Activated CD4-positive, alpha-beta T cell treated with anti-CD3 and anti-CD28 coated beads for 36 hours (primary cell): ENCODE measurements at regions of chr6 and their contacts with region 1.

Region 1: DNA sequence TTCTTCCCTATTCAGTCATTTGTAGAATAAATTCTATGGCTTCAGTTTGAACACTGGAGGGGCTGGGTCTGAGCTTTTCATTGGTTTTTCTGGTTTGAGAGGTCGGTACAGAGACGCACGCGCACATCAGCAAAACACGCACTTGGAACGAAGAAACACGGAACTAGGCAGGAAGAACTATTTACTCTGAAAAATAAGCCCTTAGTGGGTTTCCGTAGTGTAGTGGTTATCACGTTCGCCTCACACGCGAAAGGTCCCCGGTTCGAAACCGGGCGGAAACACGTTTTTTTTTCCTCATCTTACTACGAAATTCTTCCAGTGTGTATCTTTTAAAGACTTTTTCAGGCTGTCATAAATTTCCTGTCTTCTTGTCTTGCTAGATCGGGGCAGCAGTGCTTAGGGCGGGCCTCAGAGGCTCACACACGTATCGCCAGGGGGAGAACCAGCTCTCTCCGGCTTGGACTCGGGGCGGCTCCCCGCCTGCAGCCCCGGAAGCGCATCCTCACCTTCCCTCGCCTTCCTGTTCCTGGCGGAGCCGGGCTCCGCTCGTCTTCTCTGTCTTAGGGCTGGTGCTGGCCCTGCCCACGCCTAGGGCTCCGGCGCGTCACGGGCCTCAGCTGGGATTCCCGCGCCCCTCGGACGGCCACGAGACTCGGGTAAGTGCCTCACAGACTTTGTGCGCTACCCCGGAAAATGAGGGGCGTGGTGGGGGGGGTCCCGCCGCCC is at the start of gene HMGN4:
- DNase-seq: peak; percentile 89
- ATAC-seq: peak; percentile 63
- H3K4me3 Mint-ChIP-seq: peak within 1 kb of the TSS; percentile 89
- H3K27ac Mint-ChIP-seq: peak within 1 kb of the TSS; percentile 99
- H3K4me1 Mint-ChIP-seq: peaks cover 57% of the 10 kb centered on the region
- H3K27me3 Mint-ChIP-seq: no peaks in the 10 kb centered on the region
- total RNA-seq, gene HMGN4: 63.6 to 86.4 TPM

Region 2: GRCh38 chr6:26175428-26176181 is 362.4 kb before region 1 on chr6:
- CTCF ChIA-PET with region 1: no interaction called
- POLR2A ChIA-PET with region 1: no interaction called
- intact Hi-C with region 1: loop called in 1 of 2 experiments (anchors 10 kb)
- DNase-seq: peak; percentile 69
- ATAC-seq: peak; percentile 14
- H3K4me3 Mint-ChIP-seq: peak overlapping the region; percentile 30
- H3K27ac Mint-ChIP-seq: peak overlapping the region; percentile 80
- H3K4me1 Mint-ChIP-seq: peaks cover 33% of the 10 kb centered on the region
- H3K27me3 Mint-ChIP-seq: no peaks in the 10 kb centered on the region

Region 3: GRCh38 chr6:26329763-26330511 is 208.1 kb before region 1 on chr6:
- CTCF ChIA-PET with region 1: interaction called, 6 read pairs
- POLR2A ChIA-PET with region 1: interaction called, 4 read pairs
- intact Hi-C with region 1: loop called (anchors 1 to 5 kb)
- DNase-seq: peak; percentile 80
- ATAC-seq: peak; percentile 37
- H3K4me3 Mint-ChIP-seq: peak overlapping the region; percentile 88
- H3K27ac Mint-ChIP-seq: peak overlapping the region; percentile 70
- H3K4me1 Mint-ChIP-seq: peaks cover 38% of the 10 kb centered on the region
- H3K27me3 Mint-ChIP-seq: peaks cover 10% of the 10 kb centered on the region

Region 4: DNA sequence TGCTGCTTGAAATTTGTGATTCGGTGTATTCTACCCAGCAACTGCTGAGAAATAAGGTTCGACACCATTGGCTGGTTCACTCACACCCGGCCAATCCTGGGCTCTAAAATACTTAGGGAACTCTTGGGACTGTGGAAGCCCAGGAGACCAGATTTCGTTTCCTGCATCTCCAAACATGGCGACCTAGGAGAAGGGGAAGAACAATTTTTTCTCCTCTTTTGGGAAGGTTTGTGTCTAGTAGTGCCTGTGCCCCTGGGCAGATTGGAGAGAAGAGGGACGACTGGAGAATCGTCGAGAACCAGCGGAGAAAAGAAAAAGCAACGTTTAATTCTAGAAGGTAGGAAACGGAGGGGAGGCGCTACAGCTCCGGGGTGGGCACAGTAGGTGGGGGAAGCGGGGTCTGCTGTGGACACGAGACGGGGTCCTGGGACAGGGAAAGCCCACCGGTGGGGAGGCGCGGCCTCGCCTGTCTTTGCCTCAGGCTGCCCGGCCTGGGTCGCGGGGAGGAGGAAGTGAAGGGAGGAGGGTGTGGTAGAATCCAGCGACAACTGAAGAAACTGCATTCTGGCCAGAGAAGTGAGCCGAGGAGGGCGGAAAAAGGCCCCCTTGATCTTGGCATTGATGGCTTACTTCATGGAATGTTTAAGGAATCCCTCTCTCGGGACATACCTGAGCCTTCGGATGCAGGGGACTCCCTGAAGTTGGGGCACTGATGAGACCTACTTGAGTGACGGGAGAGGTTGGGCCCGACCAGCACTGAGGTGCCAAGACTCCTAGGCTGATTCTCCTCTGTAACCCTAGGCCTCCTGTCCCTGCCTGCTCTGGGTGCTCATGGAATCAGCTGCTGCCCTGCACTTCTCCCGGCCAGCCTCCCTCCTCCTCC is 80.0 kb before region 1 on chr6 and contains the start of gene BTN2A1:
- CTCF ChIA-PET with region 1: interaction called, 3 read pairs
- POLR2A ChIA-PET with region 1: no interaction called
- intact Hi-C with region 1: loop called in 1 of 2 experiments (anchors 5 kb)
- DNase-seq: peak; percentile 76
- ATAC-seq: peak; percentile 99
- H3K4me3 Mint-ChIP-seq: peak within 1 kb of the TSS; percentile 87
- H3K27ac Mint-ChIP-seq: peak within 1 kb of the TSS; percentile 97
- H3K4me1 Mint-ChIP-seq: peaks cover 45% of the 10 kb centered on the region
- H3K27me3 Mint-ChIP-seq: no peaks in the 10 kb centered on the region
- total RNA-seq, gene BTN2A1: 17.3 to 17.5 TPM

Region 5: DNA sequence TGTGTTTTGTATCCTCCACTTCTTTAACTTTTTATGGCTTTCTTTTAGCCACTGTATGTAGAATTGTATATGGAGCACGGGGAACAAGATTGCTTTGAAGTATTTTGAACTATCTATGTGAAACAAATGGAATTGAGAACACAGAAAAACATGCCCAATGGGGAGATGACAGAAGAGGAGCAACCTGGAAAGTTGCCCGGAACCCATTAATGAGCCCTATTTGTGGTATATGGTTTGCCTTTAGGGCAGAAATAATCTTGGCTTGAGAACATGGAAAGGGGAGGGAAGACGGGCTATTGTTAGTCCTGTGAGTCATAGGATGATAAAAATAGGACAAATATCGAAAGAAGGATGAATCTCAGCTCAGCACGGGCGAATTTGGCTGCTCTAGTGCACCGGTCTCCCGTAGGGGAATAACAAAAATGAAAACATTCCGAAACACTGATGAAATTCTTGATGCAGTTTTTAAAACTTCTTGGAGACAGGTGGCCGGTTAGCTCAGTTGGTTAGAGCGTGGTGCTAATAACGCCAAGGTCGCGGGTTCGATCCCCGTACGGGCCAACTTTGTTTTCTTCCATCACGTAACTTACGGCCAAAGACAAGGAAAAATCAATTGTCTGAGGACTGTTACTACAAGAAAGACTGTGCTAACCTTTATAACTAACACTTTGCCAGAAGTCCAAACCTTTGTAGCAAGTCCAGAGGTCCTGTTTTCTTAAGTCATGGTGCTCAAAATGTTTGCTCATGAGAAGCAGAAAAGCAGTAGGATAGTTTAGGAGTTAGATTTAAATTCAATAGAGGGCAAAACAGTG is 15.8 kb after region 1 on chr6:
- CTCF ChIA-PET with region 1: interaction called, 15 read pairs
- POLR2A ChIA-PET with region 1: interaction called, 4 read pairs
- intact Hi-C with region 1: loop called (anchors 1 kb)
- DNase-seq: peak; percentile 89
- ATAC-seq: peak; percentile 58
- H3K4me3 Mint-ChIP-seq: no peak overlapping the region
- H3K27ac Mint-ChIP-seq: no peak overlapping the region
- H3K4me1 Mint-ChIP-seq: peaks cover 27% of the 10 kb centered on the region
- H3K27me3 Mint-ChIP-seq: no peaks in the 10 kb centered on the region

Region 6: GRCh38 chr6:27472617-27473400 is 934.8 kb after region 1 on chr6 and contains the start of gene ZNF184:
- CTCF ChIA-PET with region 1: no interaction called
- POLR2A ChIA-PET with region 1: no interaction called
- intact Hi-C with region 1: loop called in 1 of 2 experiments (anchors 10 kb)
- DNase-seq: peak; percentile 91
- ATAC-seq: peak; percentile 83
- H3K4me3 Mint-ChIP-seq: peak within 1 kb of the TSS; percentile 84
- H3K27ac Mint-ChIP-seq: peak within 1 kb of the TSS; percentile 97
- H3K4me1 Mint-ChIP-seq: peaks cover 44% of the 10 kb centered on the region
- H3K27me3 Mint-ChIP-seq: no peaks in the 10 kb centered on the region
- total RNA-seq, gene ZNF184: 11.8 to 14.5 TPM